ENCODE measurements at regions of chr17 and their contacts with region 1.

Region 1: DNA sequence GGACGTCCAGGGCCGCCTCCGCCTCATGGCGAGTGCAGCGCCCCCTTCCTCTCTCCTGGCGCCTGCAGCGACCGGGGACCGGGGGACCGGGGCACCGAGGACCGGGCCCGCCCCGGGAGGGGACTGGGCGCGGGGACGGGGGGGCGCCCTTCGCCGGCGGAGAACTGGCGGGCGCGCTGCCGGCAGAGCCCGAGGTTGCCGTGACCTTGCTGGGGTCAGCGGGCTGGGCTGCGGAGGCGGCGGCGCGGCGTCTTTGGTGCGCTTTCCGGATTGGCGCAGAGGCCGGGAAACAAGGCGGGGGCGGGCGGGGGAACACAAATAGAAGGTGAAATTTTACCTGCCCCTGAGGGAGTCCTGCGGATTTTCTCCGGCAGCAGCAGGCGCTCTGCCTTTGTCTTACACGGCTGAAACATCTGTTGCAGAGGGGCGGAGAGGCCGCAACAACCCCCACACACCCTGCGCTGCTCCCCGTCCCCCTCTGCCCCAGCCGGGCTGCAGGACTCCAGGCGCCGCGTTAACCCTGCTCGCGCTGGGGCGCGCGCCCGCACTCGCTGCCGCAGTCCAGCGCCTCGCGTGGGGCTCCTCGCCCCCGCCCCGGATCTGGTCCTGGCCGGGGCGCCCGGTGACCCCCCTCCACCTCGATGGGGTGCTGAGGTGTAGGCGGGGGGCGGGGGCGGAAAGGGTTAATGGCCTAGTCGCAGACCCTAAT is 53.5 kb downstream of the SREBF1 start:
- DNase-seq: peak in 41 of 42 donors; percentile 40 to 88 (median 69)

Region 2: GRCh38 chr17:17739388-17740066 is 43.7 kb before region 1 on chr17:
- intact Hi-C with region 1: loop called (anchors 5 kb)
- DNase-seq: peak; percentile 57 to 93 (median 79)

Region 3: GRCh38 chr17:17805575-17805974 is 22.3 kb after region 1 on chr17:
- intact Hi-C with region 1: no loop called
- DNase-seq: no peak

Region 4: GRCh38 chr17:17823433-17824118 is 40.3 kb after region 1 on chr17:
- intact Hi-C with region 1: no loop called
- DNase-seq: peak; percentile 76 to 96 (median 91)

Measured in head of caudate nucleus (tissue), 42 donors.